Activated naive CD4-positive, alpha-beta T cell treated with anti-CD3 and anti-CD28 coated beads for 36 hours (primary cell): ENCODE measurements at regions of chr1 and their contacts with region 1.

Region 1: GRCh38 chr1:205907794-205908193 is 35.5 kb downstream of the SLC26A9 start:
- DNase-seq: peak; percentile 18
- H3K4me3 Mint-ChIP-seq: no peak overlapping the region
- H3K27ac Mint-ChIP-seq: no peak overlapping the region
- H3K4me1 Mint-ChIP-seq: no peaks in the 10 kb centered on the region
- H3K27me3 Mint-ChIP-seq: no peaks in the 10 kb centered on the region

Region 2: GRCh38 chr1:205610036-205610435 is 297.8 kb before region 1 on chr1:
- CTCF ChIA-PET with region 1: no interaction called
- intact Hi-C with region 1: no loop called
- DNase-seq: no peak
- H3K4me3 Mint-ChIP-seq: no peak overlapping the region
- H3K27ac Mint-ChIP-seq: no peak overlapping the region
- H3K4me1 Mint-ChIP-seq: peaks cover 49% of the 10 kb centered on the region
- H3K27me3 Mint-ChIP-seq: no peaks in the 10 kb centered on the region

Region 3: DNA sequence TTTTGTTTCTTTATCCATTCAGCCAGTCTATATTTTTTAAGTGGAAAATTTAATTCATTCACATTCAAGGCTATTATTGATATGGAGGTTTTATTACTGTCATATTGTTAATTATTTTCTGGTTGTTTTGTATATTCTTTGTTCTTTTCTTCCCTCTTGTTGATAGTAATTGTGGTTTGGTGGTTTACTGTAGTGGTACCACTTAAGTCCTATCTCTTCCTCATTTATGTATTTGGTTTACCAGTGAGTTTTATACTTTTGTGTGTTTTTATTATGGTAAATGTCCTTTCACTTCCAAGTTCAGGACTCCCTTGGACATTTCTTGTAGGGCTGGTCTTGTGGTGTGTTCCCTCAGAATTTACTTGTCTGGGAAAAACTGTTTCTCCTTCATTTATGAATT is 29.8 kb before region 1 on chr1:
- CTCF ChIA-PET with region 1: no interaction called
- intact Hi-C with region 1: no loop called
- DNase-seq: no peak
- H3K4me3 Mint-ChIP-seq: no peak overlapping the region
- H3K27ac Mint-ChIP-seq: peak overlapping the region; percentile 68
- H3K4me1 Mint-ChIP-seq: no peaks in the 10 kb centered on the region
- H3K27me3 Mint-ChIP-seq: peaks cover 7% of the 10 kb centered on the region

Region 4: DNA sequence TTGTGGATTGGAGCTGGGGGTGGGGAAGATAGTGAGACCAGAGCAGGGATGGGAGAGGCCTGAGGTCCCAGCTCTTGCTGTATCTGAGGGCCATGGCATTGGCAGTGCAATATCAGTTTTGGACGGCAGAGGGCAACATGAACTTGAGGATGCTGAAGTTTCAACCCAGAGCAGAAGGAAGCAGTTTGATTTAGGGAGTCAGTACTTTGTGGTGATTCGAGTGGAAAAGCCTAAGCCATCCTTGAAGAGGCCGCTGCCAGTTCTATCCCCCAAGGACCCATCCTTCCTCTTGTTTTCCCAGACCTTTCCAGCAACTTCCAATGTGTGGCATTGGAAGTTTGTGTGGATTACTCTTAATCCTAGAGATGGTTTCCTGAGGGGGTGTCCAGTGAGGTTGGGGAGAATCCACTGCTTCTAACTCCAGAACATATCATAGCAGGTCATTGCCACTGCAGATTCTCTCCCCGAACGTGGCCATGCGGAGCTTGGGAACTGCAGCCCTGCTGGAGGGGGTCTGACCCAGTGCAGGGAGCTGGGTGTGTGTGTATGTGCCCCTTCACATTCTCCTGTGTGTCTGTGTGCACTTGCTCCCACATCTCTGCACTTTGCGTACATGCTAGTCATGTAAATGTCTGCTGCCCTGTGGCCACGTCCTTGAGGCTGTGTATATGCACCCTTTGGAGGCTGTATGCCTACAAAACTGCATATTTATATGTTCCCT is 11.4 kb after region 1 on chr1:
- CTCF ChIA-PET with region 1: interaction called, 10 read pairs
- intact Hi-C with region 1: no loop called
- DNase-seq: peak; percentile 91
- H3K4me3 Mint-ChIP-seq: no peak overlapping the region
- H3K27ac Mint-ChIP-seq: no peak overlapping the region
- H3K4me1 Mint-ChIP-seq: no peaks in the 10 kb centered on the region
- H3K27me3 Mint-ChIP-seq: no peaks in the 10 kb centered on the region